Heart left ventricle (tissue), 16 donors: ENCODE measurements at regions of chr12 and their contacts with region 1.

Region 1: DNA sequence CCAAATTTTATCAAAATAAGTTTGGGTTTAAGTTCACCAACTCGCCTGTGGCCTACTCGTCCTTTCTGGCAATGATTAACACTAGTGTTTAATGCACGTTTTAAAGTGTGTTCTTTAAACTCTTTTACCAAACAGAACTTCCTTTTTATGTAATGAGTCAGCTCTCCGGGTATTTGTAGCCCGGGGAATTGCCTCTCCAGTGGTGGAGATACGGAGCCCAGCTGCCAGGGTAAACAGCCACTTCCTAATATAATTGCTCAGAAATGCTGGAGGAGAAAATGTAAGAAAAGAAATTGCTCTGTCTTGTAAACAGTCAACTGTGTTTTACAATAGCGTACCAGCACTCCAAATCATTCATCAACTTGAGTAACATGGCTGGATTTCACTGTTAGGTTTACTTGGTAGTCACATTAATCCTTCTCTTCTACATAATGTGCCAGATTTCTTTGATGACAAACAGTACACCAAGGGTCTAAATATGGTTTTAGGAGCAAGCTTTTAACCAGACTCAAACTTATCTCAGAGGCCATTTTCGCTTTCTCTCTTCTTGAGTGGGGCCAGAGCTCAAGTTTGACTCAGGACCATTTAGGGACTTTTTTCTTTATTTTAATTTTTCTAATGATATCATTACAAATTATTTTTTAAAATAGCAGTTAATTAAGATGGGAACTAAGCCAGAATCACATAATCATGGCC is 101.2 kb upstream of the SLC38A2 start:
- DNase-seq: peak; percentile 70 to 79 (median 78)
- ATAC-seq: peak; percentile 70 to 92 (median 92)
- H3K4me3 ChIP-seq: peak overlapping the region in 2 of 12 donors; percentile 6 to 12
- H3K27ac ChIP-seq: peak overlapping the region; percentile 56 to 92 (median 83)
- H3K4me1 ChIP-seq: peaks cover 0 to 48% (median 28%) of the 10 kb centered on the region in 12 donors
- H3K27me3 ChIP-seq: no peaks in the 10 kb centered on the region
- CTCF ChIP-seq: no peak
- POLR2A ChIP-seq: no peak

Region 2: GRCh38 chr12:46430340-46430948 is 43.3 kb before region 1 on chr12:
- intact Hi-C with region 1: loop called in 2 of 10 experiments (anchors 5 kb)
- DNase-seq: no peak
- ATAC-seq: peak in 3 of 4 donors; percentile 75 to 81 (median 80)
- H3K4me3 ChIP-seq: no peak overlapping the region
- H3K27ac ChIP-seq: peak overlapping the region in 11 of 12 donors; percentile 10 to 81 (median 46)
- H3K4me1 ChIP-seq: peaks cover 0 to 31% (median 23%) of the 10 kb centered on the region in 12 donors
- H3K27me3 ChIP-seq: no peaks in the 10 kb centered on the region
- CTCF ChIP-seq: no peak
- POLR2A ChIP-seq: no peak

Region 3: GRCh38 chr12:46439793-46440511 is 33.8 kb before region 1 on chr12:
- intact Hi-C with region 1: loop called in 1 of 10 experiments (anchors 5 kb)
- DNase-seq: no peak
- ATAC-seq: no peak
- H3K4me3 ChIP-seq: no peak overlapping the region
- H3K27ac ChIP-seq: no peak overlapping the region
- H3K4me1 ChIP-seq: peaks cover 0 to 11% (median 1%) of the 10 kb centered on the region in 12 donors
- H3K27me3 ChIP-seq: no peaks in the 10 kb centered on the region
- CTCF ChIP-seq: no peak
- POLR2A ChIP-seq: no peak

Region 4: DNA sequence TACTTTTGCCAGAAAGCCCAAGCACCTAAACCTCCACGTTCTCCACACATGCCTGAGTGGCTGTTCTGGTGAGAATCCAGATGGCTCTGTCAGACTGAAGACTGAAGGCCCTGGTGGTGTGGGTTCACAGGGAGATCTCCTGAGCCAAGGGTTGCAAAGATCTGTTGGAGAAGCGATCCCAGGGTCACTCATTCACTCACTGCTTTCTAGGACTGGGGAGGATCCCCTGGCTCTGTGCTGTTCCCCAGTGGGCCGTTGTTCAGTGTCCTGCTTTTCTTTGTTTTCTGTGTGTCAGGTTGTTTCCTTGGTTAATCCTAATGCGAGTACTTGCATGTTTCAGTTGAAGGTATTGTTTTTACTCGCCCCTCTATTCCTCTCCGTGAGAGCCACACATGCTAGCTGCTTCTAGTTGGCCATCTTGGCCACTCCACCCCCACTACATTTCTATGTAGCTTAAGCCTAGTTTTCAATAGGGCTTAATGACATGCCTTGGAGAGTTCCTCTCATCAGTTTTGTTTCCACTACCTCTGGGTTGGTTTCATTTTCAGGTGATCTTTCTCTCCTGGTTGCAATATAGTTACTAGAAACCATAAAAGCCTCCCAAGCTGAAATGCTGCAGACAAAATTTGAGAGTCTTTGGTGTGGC is 43.3 kb after region 1 on chr12:
- intact Hi-C with region 1: loop called in 3 of 10 experiments (anchors 5 to 10 kb)
- DNase-seq: no peak
- ATAC-seq: no peak
- H3K4me3 ChIP-seq: no peak overlapping the region
- H3K27ac ChIP-seq: no peak overlapping the region
- H3K4me1 ChIP-seq: peaks cover 0 to 38% (median 7%) of the 10 kb centered on the region in 12 donors
- H3K27me3 ChIP-seq: no peaks in the 10 kb centered on the region
- CTCF ChIP-seq: no peak
- POLR2A ChIP-seq: no peak

Region 5: GRCh38 chr12:46523863-46524770 is 50.3 kb after region 1 on chr12:
- intact Hi-C with region 1: loop called in 3 of 10 experiments (anchors 5 to 10 kb)
- DNase-seq: peak in 1 of 5 donors; percentile 39
- ATAC-seq: peak in 1 of 4 donors; percentile 48
- H3K4me3 ChIP-seq: no peak overlapping the region
- H3K27ac ChIP-seq: peak overlapping the region; percentile 24 to 87 (median 77)
- H3K4me1 ChIP-seq: peaks cover 0 to 50% (median 31%) of the 10 kb centered on the region in 12 donors
- H3K27me3 ChIP-seq: no peaks in the 10 kb centered on the region
- CTCF ChIP-seq: no peak
- POLR2A ChIP-seq: no peak